Activated CD4-positive, alpha-beta T cell treated with anti-CD3 and anti-CD28 coated beads for 36 hours (primary cell): ENCODE measurements at regions of chr6 and their contacts with region 1.

Region 1: GRCh38 chr6:2999618-3000557 is at the start of gene NQO2:
- DNase-seq: peak; percentile 96
- ATAC-seq: peak; percentile 80
- H3K4me3 Mint-ChIP-seq: peak within 1 kb of the TSS; percentile 83
- H3K27ac Mint-ChIP-seq: peak within 1 kb of the TSS; percentile 82
- H3K4me1 Mint-ChIP-seq: peaks cover 28% of the 10 kb centered on the region
- H3K27me3 Mint-ChIP-seq: no peaks in the 10 kb centered on the region
- total RNA-seq, gene NQO2: 40.7 to 44.2 TPM

Region 2: DNA sequence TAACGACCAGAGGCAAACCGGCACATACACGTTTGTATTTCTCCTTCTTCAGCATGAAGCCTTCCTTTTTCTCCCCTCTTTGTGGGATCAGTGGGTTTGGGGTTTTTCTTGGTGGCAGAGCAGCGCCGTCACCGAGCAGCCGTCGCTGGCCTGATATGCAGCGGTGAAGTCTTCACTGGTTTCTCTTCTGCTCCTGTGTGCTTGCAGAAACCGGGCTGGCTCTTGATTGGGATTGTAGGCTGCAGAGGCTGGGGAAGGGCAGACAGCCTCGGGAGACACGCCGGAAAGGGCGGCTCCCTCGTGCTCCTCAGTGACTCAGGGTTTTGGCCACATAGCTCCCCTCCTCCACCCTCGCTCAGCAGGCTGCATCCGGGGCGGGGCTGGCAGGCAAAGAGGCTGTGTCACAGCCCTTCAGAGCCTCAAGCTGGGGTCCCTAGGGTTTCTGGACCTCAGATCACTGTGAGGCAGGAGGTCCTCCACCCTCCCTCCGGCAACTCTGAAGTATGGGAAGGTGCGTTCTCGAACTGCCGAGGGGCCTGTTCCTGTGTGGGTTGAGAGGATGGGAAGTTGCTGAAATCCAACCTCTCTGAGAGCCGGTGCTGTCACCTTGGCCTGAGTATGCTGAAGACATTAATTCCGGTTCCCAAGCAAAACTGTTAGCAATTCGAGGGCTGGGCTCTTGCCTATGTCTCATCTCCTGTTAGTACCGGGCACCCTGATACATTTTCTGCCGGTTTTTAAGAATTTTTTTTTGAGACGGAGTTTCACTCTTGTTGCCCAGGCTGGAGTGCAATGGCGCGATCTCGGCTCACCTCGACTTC is 24.0 kb after region 1 on chr6:
- CTCF ChIA-PET with region 1: interaction called, 9 read pairs
- POLR2A ChIA-PET with region 1: interaction called, 4 read pairs
- intact Hi-C with region 1: loop called (anchors 1 to 2 kb)
- DNase-seq: peak; percentile 95
- ATAC-seq: peak; percentile 86
- H3K4me3 Mint-ChIP-seq: peak overlapping the region; percentile 78
- H3K27ac Mint-ChIP-seq: peak overlapping the region; percentile 95
- H3K4me1 Mint-ChIP-seq: peaks cover 62% of the 10 kb centered on the region
- H3K27me3 Mint-ChIP-seq: no peaks in the 10 kb centered on the region

Region 3: DNA sequence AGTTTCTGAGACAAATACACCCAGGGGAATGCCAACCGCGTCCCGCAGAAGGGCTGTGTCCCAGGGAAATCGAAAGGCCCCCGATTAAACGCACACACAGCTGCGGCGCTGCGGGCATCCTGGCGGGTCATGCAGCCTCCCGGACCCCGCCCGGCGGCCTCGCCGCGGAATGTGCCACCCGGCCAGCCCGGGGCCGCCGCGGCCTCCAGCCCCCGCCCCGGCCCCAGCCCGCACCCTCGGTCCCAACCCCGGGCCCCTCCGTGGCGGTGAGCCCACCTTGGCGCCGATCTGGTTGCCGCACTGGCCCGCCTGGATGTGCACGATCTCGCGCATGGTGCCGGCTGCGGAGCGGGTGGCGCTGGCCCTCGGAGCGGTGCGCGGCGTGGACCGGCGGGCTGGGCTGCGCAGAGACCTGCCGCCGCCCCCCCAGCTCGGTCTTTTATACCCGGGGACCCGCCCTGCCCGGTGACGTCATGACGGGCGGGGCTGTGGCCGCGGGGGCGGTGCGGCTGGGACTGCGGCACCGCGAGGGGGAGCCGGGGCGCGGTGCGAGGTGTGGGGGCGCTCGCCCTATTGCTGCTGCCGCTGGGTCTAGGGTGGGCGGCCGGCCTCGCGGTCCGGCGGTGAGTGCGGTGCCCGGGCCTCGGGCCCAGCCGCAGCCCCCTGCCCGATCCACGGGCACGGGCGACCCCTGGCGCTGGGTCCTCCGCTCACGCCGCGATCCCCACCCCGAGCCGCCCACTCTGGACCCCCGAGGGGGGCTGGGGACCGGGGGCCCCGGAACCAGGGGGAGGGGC is 157.4 kb after region 1 on chr6 and contains the start of gene TUBB2A:
- CTCF ChIA-PET with region 1: no interaction called
- POLR2A ChIA-PET with region 1: no interaction called
- intact Hi-C with region 1: loop called in 1 of 2 experiments (anchors 1 kb)
- DNase-seq: peak; percentile 87
- ATAC-seq: peak; percentile 68
- H3K4me3 Mint-ChIP-seq: peak within 1 kb of the TSS; percentile 74
- H3K27ac Mint-ChIP-seq: peak within 1 kb of the TSS; percentile 55
- H3K4me1 Mint-ChIP-seq: peaks cover 25% of the 10 kb centered on the region
- H3K27me3 Mint-ChIP-seq: peaks cover 20% of the 10 kb centered on the region
- total RNA-seq, gene TUBB2A: 1.7 to 1.8 TPM

Region 4: GRCh38 chr6:3251462-3252314 is 251.8 kb after region 1 on chr6:
- CTCF ChIA-PET with region 1: no interaction called
- POLR2A ChIA-PET with region 1: no interaction called
- intact Hi-C with region 1: loop called in 1 of 2 experiments (anchors 2 kb)
- DNase-seq: peak; percentile 89
- ATAC-seq: peak; percentile 95
- H3K4me3 Mint-ChIP-seq: no peak overlapping the region
- H3K27ac Mint-ChIP-seq: no peak overlapping the region
- H3K4me1 Mint-ChIP-seq: peaks cover 6% of the 10 kb centered on the region
- H3K27me3 Mint-ChIP-seq: peaks cover 29% of the 10 kb centered on the region

Region 5: DNA sequence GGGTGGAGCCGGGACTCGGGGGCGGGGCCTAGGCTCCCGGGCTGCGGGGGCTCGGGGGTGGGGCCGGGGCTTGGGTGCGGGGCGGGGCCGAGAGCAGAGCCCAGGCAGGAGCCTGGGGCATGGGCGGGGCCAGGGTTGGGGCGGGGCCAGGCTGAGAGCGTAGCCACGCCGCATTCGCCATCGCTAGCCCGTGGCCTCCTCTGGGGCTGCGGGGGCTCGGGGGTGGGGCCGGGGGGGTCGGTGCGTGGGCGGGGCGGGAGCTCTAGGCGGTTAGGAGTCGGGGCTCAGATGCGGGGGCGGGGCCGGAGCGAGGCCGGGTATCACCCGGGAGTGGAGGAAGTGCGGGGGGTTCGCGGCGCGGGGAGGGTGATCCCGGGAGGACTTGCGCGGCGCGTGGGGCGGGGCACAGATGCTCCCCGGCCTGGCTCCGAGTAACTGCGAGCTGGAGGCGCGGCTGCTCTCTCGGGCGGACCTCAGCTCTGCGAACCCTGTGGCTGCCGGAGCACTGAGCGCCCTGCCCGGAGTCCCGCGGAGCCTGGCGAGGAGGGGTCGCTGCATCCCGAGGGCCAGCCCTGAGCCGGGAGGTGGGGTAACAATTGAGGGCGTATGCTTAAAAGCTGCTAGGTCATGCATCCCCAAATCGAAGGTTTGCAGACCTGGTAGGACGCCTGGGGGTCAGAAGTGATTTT is 1135.9 kb after region 1 on chr6:
- CTCF ChIA-PET with region 1: no interaction called
- POLR2A ChIA-PET with region 1: no interaction called
- intact Hi-C with region 1: loop called in 1 of 2 experiments (anchors 2 kb)
- DNase-seq: peak; percentile 98
- ATAC-seq: peak; percentile 92
- H3K4me3 Mint-ChIP-seq: peak overlapping the region; percentile 79
- H3K27ac Mint-ChIP-seq: peak overlapping the region; percentile 85
- H3K4me1 Mint-ChIP-seq: peaks cover 46% of the 10 kb centered on the region
- H3K27me3 Mint-ChIP-seq: no peaks in the 10 kb centered on the region